CD8-positive, alpha-beta T cell (primary cell): ENCODE measurements at regions of chr6 and their contacts with region 1.

Region 1: DNA sequence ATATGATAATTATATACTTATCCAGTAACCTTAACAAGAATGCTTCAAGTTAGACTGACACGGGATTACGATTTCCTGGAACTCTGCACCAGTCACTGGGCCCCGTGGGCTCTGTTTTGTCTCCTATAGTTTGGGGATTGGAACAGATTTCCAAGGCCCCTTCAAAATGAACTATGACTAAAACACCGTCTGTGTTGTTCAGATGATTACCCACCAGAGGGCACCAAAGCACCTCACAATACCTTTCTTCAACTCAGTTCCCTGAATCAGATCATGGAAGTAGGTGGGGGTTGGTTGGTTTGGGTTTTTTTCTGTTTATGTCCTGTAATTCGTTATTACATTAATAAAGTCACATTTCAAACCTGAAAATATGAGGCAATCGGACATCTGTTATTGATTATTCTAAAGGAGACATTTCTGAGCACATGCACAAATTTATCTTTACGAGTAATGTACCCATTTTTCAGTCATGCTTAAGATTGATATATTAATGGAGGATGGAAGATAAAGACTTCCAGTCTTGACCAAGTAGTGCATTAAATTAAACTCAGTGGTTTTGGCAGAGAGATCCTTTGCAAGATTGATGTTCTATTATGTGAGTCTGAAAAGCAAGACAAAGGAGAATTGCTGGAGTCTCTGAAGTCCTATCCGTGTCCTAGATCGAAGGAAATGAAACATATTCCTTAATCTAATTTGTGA is 112.0 kb upstream of the COL21A1 start:
- DNase-seq: peak; percentile 2 to 65 (median 46)
- ATAC-seq: peak; percentile 67
- H3K4me3 ChIP-seq: no peak overlapping the region
- H3K4me3 Mint-ChIP-seq: no peak overlapping the region
- H3K27ac ChIP-seq: no peak overlapping the region
- H3K27ac Mint-ChIP-seq: no peak overlapping the region
- H3K4me1 ChIP-seq: no peaks in the 10 kb centered on the region
- H3K4me1 Mint-ChIP-seq: no peaks in the 10 kb centered on the region
- H3K27me3 ChIP-seq: no peaks in the 10 kb centered on the region
- H3K27me3 Mint-ChIP-seq: no peaks in the 10 kb centered on the region
- CTCF ChIP-seq: peak; percentile 77

Region 2: DNA sequence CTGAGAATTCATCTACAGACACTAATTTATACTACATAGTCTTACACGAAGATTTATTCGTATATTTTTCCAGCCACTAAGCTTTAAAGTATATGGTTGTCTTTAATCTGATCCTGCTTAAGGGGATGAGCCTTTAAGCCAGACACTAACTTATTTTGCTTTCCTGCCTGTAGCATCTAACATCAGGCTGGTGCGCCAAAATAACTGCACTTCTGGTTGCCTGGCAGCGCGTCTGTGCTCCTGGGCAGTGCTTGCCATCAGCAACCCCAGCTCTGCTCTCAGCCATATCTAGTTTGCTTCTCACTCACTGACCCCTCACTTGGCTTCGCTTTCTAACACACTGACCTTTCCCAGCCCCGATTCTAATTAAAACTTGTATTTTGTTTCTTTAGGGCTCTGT is 802.2 kb before region 1 on chr6:
- CTCF ChIA-PET with region 1: no interaction called
- POLR2A ChIA-PET with region 1: no interaction called
- intact Hi-C with region 1: no loop called
- DNase-seq: no peak
- ATAC-seq: no peak
- H3K4me3 ChIP-seq: no peak overlapping the region
- H3K4me3 Mint-ChIP-seq: no peak overlapping the region
- H3K27ac ChIP-seq: no peak overlapping the region
- H3K27ac Mint-ChIP-seq: no peak overlapping the region
- H3K4me1 ChIP-seq: no peaks in the 10 kb centered on the region
- H3K4me1 Mint-ChIP-seq: no peaks in the 10 kb centered on the region
- H3K27me3 ChIP-seq: no peaks in the 10 kb centered on the region
- H3K27me3 Mint-ChIP-seq: no peaks in the 10 kb centered on the region
- CTCF ChIP-seq: no peak

Region 3: GRCh38 chr6:56324396-56324795 is 35.0 kb before region 1 on chr6:
- CTCF ChIA-PET with region 1: no interaction called
- POLR2A ChIA-PET with region 1: no interaction called
- intact Hi-C with region 1: loop called in 1 of 2 experiments (anchors 1 kb)
- DNase-seq: no peak
- ATAC-seq: no peak
- H3K4me3 ChIP-seq: no peak overlapping the region
- H3K4me3 Mint-ChIP-seq: no peak overlapping the region
- H3K27ac ChIP-seq: no peak overlapping the region
- H3K27ac Mint-ChIP-seq: no peak overlapping the region
- H3K4me1 ChIP-seq: no peaks in the 10 kb centered on the region
- H3K4me1 Mint-ChIP-seq: no peaks in the 10 kb centered on the region
- H3K27me3 ChIP-seq: no peaks in the 10 kb centered on the region
- H3K27me3 Mint-ChIP-seq: peaks cover 5% of the 10 kb centered on the region
- CTCF ChIP-seq: no peak

Region 4: DNA sequence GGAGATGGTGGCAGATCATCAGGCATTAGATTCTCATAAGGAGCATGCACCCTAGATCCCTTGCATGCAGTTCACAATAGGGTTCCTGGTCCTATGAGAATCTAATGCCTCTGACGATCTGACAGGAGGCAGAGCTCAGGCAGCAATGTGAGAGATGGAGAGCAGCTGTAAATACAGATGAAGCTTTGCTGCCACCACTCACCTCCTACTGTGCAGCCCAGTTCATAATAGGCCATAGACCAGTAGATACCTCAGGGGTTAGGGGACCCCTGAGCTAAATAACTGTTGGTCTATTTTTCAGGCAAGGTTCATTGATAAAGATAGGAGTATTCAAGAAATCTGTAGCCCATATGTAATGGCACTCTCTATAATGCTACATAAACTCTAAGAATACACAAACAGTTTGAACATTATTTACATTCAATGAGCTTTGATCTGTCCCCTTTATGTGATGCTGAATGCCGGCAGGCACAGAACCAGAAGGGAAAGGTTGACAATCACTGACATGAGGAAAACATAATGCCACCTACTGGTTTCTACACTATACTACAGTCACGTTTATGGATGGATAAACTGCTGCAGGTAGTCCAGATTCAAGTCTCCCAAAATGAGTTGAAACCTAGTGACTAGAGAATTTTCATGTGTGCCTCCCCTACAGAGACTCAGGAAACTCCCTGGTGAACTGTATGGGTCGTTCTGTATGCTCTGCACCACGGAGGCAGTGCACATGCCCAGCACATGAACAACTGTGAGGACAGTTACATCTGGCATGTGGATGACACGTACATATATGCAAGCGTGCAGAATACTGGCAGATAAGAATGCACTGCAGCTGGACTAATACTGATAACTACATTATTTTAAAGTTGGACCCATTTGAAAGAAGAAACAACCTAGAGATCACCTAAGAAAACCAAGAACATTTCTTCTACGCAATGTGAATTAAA is 211.3 kb after region 1 on chr6:
- CTCF ChIA-PET with region 1: interaction called, 10 read pairs
- POLR2A ChIA-PET with region 1: no interaction called
- intact Hi-C with region 1: loop called (anchors 1 kb)
- DNase-seq: peak in 2 of 9 experiments; percentile 13 to 33
- ATAC-seq: no peak
- H3K4me3 ChIP-seq: no peak overlapping the region
- H3K4me3 Mint-ChIP-seq: no peak overlapping the region
- H3K27ac ChIP-seq: no peak overlapping the region
- H3K27ac Mint-ChIP-seq: no peak overlapping the region
- H3K4me1 ChIP-seq: no peaks in the 10 kb centered on the region
- H3K4me1 Mint-ChIP-seq: no peaks in the 10 kb centered on the region
- H3K27me3 ChIP-seq: no peaks in the 10 kb centered on the region
- H3K27me3 Mint-ChIP-seq: no peaks in the 10 kb centered on the region
- CTCF ChIP-seq: peak; percentile 50

Region 5: DNA sequence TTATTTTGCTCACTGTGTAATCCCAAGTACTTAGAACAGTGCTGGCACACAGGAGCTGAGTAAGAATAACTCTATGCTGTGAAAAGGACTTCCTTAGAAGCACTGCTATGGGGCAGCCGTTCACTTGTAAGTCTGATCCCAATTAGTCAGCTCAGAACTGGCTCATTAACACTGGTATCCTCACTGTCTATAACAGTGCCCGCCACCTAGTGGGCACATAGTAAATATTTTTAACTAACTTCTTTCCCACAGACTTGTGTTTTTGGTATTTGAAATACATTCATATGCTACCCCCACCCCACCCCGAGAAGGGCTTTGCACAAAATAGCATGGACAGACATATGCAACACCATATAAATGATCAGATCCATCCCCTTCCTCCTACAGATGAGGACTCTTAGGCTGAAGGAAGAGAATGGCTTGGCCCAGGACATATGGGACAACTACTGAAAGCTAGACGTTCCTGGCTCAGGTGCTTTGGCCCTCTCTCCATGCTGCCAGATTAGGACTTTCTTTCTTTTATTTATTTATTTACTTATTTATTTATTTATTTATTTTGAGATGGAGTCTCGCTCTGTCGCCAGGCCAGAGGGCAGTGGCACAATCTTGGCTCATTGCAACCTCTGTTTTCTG is 236.3 kb after region 1 on chr6:
- CTCF ChIA-PET with region 1: interaction called, 4 read pairs
- POLR2A ChIA-PET with region 1: no interaction called
- intact Hi-C with region 1: loop called (anchors 1 kb)
- DNase-seq: peak in 5 of 9 experiments; percentile 1 to 51 (median 17)
- ATAC-seq: peak; percentile 29
- H3K4me3 ChIP-seq: no peak overlapping the region
- H3K4me3 Mint-ChIP-seq: no peak overlapping the region
- H3K27ac ChIP-seq: no peak overlapping the region
- H3K27ac Mint-ChIP-seq: no peak overlapping the region
- H3K4me1 ChIP-seq: no peaks in the 10 kb centered on the region
- H3K4me1 Mint-ChIP-seq: peaks cover 6% of the 10 kb centered on the region
- H3K27me3 ChIP-seq: no peaks in the 10 kb centered on the region
- H3K27me3 Mint-ChIP-seq: peaks cover 2% of the 10 kb centered on the region
- CTCF ChIP-seq: peak; percentile 51

Region 6: DNA sequence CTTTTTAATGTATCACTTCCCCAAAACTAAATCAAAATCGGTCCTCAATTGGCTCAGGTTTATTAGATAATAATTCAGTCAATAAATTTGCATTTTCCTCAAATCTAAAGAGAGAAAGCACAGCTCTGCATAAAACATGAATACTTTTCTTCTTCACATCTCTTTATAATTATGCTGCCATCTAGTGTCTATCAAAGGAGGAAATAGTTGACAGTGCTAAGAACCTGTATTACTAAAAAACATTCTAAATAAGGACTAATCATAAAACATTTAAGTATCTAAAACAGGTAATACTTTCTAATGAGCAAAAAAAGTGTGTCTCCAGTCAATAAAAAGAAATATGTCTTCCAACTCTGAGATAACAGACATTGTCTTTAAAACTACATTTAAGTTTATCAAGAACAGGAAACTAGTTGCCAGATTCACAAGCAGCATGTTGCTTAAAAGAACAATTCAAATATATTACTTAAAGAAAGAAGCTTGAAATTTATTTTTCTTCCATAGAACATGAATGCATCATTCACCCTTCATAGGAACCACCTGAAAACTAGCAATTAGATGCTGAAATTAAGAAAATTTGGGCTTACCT is 339.8 kb after region 1 on chr6:
- CTCF ChIA-PET with region 1: no interaction called
- POLR2A ChIA-PET with region 1: no interaction called
- intact Hi-C with region 1: loop called in 1 of 2 experiments (anchors 2 kb)
- DNase-seq: no peak
- ATAC-seq: no peak
- H3K4me3 ChIP-seq: no peak overlapping the region
- H3K4me3 Mint-ChIP-seq: no peak overlapping the region
- H3K27ac ChIP-seq: no peak overlapping the region
- H3K27ac Mint-ChIP-seq: no peak overlapping the region
- H3K4me1 ChIP-seq: no peaks in the 10 kb centered on the region
- H3K4me1 Mint-ChIP-seq: no peaks in the 10 kb centered on the region
- H3K27me3 ChIP-seq: no peaks in the 10 kb centered on the region
- H3K27me3 Mint-ChIP-seq: no peaks in the 10 kb centered on the region
- CTCF ChIP-seq: no peak

Region 7: DNA sequence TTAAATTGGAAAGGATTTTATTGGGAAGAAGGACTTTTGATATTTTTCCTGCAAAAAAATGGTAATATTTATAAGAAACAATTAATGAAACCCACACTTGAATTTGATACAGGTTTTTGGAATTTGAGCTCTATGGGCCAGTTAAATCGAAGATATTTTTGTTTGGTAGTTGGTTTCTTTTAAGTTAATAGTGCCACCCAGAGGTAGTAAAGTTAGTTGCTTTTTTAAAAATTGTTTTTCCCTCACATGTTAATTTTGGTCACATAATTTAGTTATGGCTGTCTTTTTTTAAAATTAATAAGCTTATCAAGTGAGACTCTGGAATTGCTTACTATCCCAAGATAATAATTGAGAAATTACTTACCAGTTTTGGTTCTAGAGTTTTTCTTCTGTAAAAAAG is 965.2 kb after region 1 on chr6:
- CTCF ChIA-PET with region 1: no interaction called
- POLR2A ChIA-PET with region 1: no interaction called
- intact Hi-C with region 1: loop called in 1 of 2 experiments (anchors 5 kb)
- DNase-seq: peak in 2 of 9 experiments; percentile 8 to 26
- ATAC-seq: no peak
- H3K4me3 ChIP-seq: no peak overlapping the region
- H3K4me3 Mint-ChIP-seq: no peak overlapping the region
- H3K27ac ChIP-seq: no peak overlapping the region
- H3K27ac Mint-ChIP-seq: no peak overlapping the region
- H3K4me1 ChIP-seq: no peaks in the 10 kb centered on the region
- H3K4me1 Mint-ChIP-seq: peaks cover 18% of the 10 kb centered on the region
- H3K27me3 ChIP-seq: no peaks in the 10 kb centered on the region
- H3K27me3 Mint-ChIP-seq: no peaks in the 10 kb centered on the region
- CTCF ChIP-seq: peak; percentile 40